ENCODE measurements at regions of chr1 and their contacts with region 1.

Region 1: DNA sequence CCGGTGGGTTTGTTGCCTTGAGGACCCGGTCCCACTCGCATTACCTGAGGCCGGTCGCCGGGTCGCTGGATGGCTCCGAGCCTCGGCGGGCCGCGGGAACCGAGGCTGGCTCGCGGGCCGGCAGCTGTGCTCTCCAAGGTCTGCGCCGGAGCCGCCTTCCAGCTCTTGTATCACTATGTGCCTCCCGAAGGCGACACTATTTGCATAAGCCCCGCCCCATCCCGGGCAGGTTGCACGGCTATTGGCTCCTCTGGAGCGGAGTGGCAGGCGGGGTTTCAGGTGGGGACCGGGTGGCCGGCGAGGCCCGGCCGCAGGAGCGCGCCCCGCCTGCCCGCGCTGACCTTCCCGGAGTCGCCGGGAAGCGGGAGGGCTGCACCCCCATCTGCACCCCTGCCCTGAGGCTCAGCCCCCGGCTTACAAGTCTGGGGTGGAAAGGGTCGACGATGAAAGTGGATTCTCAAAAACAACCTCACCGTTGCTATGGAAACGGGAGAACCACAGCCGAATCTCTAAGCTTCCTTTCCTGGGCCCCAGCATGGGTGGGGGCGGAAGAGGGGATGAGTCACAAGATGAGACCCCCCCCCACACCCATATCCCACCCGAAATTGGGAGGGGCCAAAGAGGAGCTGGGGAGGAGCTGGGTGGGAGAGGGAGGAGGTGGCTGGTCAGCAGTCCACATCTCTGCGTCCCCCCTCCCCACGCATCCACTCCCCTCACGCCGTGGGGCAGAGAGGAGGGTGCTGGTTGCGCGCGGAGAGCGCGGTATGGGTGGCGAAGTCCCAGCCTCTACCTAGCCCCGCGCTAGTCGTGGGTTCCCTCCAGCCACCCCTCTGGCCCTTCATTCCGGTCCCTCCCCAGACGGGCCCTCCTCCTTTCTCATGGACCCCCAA is at the start of gene HPCAL4:
- DNase-seq: peak; percentile 91 to 95
- ATAC-seq: peak; percentile 62 to 66
- H3K4me3 ChIP-seq: peak within 1 kb of the TSS; percentile 47 to 60 (median 51)
- H3K27ac ChIP-seq: peak within 1 kb of the TSS in 3 of 4 donors; percentile 39 to 99 (median 91)
- H3K4me1 ChIP-seq: peaks cover 40 to 44% of the 10 kb centered on the region in 2 donors
- H3K27me3 ChIP-seq: peaks cover 0 to 3% (median 0%) of the 10 kb centered on the region in 3 donors
- CTCF ChIP-seq: no peak
- POLR2A ChIP-seq: peak; percentile 80 to 89
- total RNA-seq, gene HPCAL4: 0.92 to 9.0 (median 3.2) TPM

Region 2: GRCh38 chr1:39676951-39677350 is 14.6 kb before region 1 on chr1:
- in situ Hi-C with region 1: no loop called
- intact Hi-C with region 1: loop called (anchors 1 kb)
- DNase-seq: peak; percentile 77 to 88
- ATAC-seq: peak; percentile 74 to 78
- H3K4me3 ChIP-seq: no peak overlapping the region
- H3K27ac ChIP-seq: peak overlapping the region; percentile 74 to 97 (median 86)
- H3K4me1 ChIP-seq: peaks cover 21 to 37% of the 10 kb centered on the region in 2 donors
- H3K27me3 ChIP-seq: no peaks in the 10 kb centered on the region
- CTCF ChIP-seq: no peak
- POLR2A ChIP-seq: no peak

Region 3: DNA sequence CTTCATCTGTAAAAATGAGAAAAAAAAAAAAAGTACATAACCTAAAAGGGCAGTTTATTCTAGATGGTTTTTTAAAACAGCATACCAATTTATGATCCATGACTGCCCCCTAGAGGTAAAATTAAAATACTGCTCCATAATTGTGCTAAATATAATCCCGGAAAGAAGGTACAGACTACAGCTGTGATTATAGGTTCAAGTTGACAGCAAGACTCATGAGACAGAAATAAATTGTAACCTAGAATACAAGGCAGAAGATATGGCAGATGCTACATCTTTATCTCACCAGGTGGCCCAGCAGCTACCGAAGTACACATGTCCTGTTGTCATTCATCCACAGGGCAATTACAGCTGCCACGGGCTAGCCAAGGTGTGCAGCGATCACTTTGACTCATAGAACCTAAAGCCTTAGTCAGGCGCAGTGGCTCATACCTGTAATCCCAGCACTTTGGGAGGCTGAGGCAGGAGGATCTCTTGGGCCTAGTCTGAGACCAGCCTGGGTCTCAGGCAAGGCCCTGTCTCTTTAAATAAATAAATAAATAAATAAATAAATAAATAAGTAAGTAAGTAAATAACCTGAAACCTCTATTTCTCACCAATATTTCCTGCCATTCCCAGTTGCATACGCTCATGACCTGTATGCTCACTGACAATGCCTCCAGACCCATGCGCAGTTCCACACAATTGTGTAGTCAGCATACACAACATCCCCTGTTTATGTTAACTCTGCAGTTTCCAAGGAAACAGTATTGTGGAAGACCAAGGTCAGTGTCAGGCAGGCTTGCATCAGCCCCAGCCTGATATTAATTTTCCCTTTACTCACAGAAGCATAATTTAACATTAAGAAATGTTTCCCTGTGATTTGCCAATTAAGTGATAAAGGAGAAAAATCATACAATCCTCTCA is 28.8 kb after region 1 on chr1:
- in situ Hi-C with region 1: no loop called
- intact Hi-C with region 1: loop called (anchors 2 kb)
- DNase-seq: peak; percentile 42 to 46
- ATAC-seq: peak; percentile 98 to 99
- H3K4me3 ChIP-seq: no peak overlapping the region
- H3K27ac ChIP-seq: peak overlapping the region; percentile 60 to 71 (median 64)
- H3K4me1 ChIP-seq: no peaks in the 10 kb centered on the region
- H3K27me3 ChIP-seq: peaks cover 0 to 5% (median 0%) of the 10 kb centered on the region in 3 donors
- CTCF ChIP-seq: peak; percentile 69 to 96 (median 77)
- POLR2A ChIP-seq: no peak

Region 4: GRCh38 chr1:39852214-39852791 is 160.8 kb after region 1 on chr1:
- in situ Hi-C with region 1: no loop called
- intact Hi-C with region 1: no loop called
- DNase-seq: no peak
- ATAC-seq: no peak
- H3K4me3 ChIP-seq: no peak overlapping the region
- H3K27ac ChIP-seq: no peak overlapping the region
- H3K4me1 ChIP-seq: no peaks in the 10 kb centered on the region
- H3K27me3 ChIP-seq: no peaks in the 10 kb centered on the region
- CTCF ChIP-seq: no peak
- POLR2A ChIP-seq: no peak